IMR-90 (cell line): ENCODE measurements at regions of chr13 and their contacts with region 1.

Region 1: DNA sequence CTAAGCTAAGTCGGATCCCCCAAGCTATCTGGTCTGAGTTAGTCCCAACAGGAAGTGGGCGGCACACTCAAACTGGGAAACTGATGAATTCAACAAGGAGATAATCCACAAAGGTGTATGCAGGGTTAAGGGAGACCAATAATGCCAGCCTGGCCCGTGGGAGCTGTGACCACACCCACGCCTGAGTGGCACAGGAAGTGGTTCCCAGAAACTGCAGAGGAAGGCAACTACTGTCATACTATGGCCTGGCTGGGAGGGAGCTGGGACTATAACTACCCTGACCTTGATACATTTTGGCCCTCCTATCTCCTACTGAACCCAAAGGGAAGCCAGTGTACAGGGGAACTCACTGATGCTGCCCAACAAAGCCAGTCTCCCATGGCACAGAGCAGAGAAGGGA is 85.5 kb upstream of the TDRD3 start:
- DNase-seq: no peak
- ATAC-seq: no peak
- H3K4me3 ChIP-seq: no peak overlapping the region
- H3K27ac ChIP-seq: no peak overlapping the region
- H3K4me1 ChIP-seq: no peaks in the 10 kb centered on the region
- H3K27me3 ChIP-seq: peaks cover 5% of the 10 kb centered on the region
- CTCF ChIP-seq: no peak
- POLR2A ChIP-seq: no peak
- RAD21 ChIP-seq: no peak

Region 2: GRCh38 chr13:60520902-60521569 is 209.5 kb after region 1 on chr13:
- CTCF ChIA-PET with region 1: no interaction called
- POLR2A ChIA-PET with region 1: no interaction called
- dilution Hi-C with region 1: no loop called
- in situ Hi-C with region 1: no loop called
- intact Hi-C with region 1: no loop called
- DNase-seq: no peak
- ATAC-seq: no peak
- H3K4me3 ChIP-seq: no peak overlapping the region
- H3K27ac ChIP-seq: no peak overlapping the region
- H3K4me1 ChIP-seq: no peaks in the 10 kb centered on the region
- H3K27me3 ChIP-seq: no peaks in the 10 kb centered on the region
- CTCF ChIP-seq: no peak
- POLR2A ChIP-seq: no peak
- RAD21 ChIP-seq: no peak

Region 3: DNA sequence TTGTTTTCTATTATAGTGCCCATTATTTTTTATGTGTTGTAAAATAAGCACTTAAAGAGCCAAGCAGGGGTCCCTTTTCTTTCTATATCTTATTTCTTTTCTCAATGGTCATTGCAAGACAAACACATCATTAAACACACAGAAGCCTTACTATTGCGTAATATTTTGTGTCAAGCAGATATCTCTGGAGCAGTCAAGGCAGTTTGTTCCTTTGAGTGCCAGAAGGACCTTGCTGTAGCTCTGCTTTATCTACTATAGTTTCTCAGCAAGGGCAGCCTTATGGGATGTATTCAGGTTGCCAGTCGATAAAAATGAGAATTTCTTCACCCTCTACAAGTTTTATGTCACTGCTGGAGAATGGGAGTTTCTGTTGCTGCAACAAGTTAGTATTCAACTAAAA is 404.8 kb after region 1 on chr13:
- CTCF ChIA-PET with region 1: no interaction called
- POLR2A ChIA-PET with region 1: no interaction called
- dilution Hi-C with region 1: no loop called
- in situ Hi-C with region 1: no loop called
- intact Hi-C with region 1: loop called (anchors 5 kb)
- DNase-seq: no peak
- ATAC-seq: no peak
- H3K4me3 ChIP-seq: no peak overlapping the region
- H3K27ac ChIP-seq: no peak overlapping the region
- H3K4me1 ChIP-seq: no peaks in the 10 kb centered on the region
- H3K27me3 ChIP-seq: no peaks in the 10 kb centered on the region
- CTCF ChIP-seq: no peak
- POLR2A ChIP-seq: no peak
- RAD21 ChIP-seq: no peak